ENCODE measurements at regions of chr2 and their contacts with region 1.

Region 1: GRCh38 chr2:113977660-113978523 is 88.0 kb downstream of the ACTR3 start:
- DNase-seq: peak; percentile 49
- H3K4me3 ChIP-seq: no peak overlapping the region
- H3K27ac ChIP-seq: peak overlapping the region; percentile 7 to 15
- H3K4me1 ChIP-seq: peaks cover 12% of the 10 kb centered on the region
- H3K27me3 ChIP-seq: no peaks in the 10 kb centered on the region
- CTCF ChIP-seq: peak; percentile 8 to 39 (median 18)
- POLR2A ChIP-seq: no peak

Region 2: DNA sequence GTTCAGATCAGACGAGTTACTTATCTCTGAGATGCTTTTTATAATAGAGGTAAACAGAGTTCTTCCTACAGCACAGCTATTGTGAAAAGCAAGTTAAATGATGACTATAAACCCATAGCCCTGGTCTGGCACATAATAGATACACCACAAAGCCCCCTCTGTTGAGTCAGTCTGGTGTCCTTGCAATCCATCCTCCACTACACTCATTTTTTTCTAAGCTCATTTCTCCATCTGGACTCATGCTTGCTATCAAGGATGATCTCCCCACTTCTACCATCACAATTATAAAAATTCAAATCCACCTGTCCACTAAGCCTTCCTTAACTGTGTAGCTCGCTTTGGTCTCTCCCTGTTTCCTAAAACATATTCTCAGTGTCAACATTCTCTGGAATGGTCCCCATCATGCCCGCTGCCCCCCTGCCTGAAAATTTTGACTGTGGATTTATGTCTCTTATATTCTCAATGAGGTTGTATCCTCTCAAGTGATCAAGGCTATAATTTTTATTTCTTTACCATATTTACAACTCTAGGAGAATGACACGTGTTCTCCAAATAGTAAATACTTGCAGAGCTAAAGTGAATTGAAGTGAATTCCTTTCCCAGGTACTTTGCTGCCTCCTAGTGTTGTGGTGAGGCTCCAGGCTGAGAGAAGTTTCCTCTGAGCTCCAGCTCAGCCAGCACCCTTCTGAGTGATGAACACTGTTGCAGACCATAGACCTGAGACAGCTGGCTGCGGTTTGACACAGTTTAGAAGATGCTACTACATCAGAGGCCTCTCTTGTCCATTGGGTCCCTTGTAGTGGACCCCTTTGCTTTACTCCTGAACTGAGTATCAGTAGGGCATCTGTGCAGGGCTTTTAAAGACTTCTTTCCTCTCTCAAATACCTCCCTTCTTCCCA is 573.3 kb after region 1 on chr2:
- intact Hi-C with region 1: loop called (anchors 10 kb)
- DNase-seq: peak; percentile 75
- H3K4me3 ChIP-seq: no peak overlapping the region
- H3K27ac ChIP-seq: no peak overlapping the region
- H3K4me1 ChIP-seq: no peaks in the 10 kb centered on the region
- H3K27me3 ChIP-seq: no peaks in the 10 kb centered on the region
- CTCF ChIP-seq: peak in 2 of 3 experiments; percentile 56
- POLR2A ChIP-seq: no peak